ENCODE measurements at regions of chr9 and their contacts with region 1.

Region 1: DNA sequence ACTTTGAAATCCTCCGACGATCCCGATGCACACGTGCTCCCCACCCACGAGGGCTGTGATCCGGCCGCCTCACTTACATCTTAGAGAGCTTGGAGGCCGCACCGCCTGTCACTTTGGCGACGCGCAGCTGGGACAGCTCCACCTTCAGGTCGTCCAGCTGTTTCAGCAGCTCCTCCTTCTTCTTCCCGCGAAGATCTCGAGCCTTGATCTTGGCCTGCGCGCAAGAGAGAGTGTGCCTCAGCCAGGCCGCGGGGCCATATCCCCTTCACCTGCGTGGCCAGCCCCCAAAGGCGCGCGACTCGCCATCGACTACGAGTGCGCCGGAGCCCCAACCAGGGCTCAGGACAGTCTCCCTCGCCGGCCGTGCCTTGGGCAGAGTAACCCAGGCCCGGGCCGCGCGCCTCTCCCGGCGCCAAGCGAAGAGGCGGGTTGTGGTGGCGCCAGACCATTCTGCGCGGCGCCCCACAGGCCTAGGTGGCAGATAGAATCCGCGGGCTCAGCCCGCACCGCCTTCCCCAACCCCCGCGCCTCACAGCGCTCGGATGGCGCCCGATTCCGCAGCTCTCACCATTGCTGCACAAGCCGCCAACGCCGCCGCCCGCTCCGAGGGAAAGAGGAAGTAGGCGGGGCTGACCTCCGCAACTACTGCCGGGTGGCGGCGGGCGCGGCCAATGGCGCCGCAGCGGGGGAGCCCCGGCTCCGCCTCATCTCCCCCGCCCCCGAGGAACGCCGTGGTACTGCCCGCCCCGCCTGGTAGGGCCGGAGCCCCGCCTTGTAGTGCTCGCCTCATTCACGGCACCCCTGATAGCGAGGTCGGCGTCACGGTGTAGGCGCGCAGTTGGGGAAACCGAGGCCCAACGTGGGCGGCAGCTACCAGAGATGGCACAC is at the starts of genes ARPC5L and RPL35:
- DNase-seq: peak; percentile 92
- ATAC-seq: peak; percentile 95
- H3K4me3 Mint-ChIP-seq: peak within 1 kb of the TSS; percentile 95
- H3K27ac Mint-ChIP-seq: peak within 1 kb of the TSS; percentile 94
- H3K4me1 Mint-ChIP-seq: peaks cover 47% of the 10 kb centered on the region
- H3K27me3 Mint-ChIP-seq: no peaks in the 10 kb centered on the region
- CTCF ChIP-seq: no peak
- total RNA-seq, gene ARPC5L: 91.5 and 93.1 TPM in 2 replicates
- total RNA-seq, gene RPL35: 2,037 and 2,426 TPM in 2 replicates

Region 2: DNA sequence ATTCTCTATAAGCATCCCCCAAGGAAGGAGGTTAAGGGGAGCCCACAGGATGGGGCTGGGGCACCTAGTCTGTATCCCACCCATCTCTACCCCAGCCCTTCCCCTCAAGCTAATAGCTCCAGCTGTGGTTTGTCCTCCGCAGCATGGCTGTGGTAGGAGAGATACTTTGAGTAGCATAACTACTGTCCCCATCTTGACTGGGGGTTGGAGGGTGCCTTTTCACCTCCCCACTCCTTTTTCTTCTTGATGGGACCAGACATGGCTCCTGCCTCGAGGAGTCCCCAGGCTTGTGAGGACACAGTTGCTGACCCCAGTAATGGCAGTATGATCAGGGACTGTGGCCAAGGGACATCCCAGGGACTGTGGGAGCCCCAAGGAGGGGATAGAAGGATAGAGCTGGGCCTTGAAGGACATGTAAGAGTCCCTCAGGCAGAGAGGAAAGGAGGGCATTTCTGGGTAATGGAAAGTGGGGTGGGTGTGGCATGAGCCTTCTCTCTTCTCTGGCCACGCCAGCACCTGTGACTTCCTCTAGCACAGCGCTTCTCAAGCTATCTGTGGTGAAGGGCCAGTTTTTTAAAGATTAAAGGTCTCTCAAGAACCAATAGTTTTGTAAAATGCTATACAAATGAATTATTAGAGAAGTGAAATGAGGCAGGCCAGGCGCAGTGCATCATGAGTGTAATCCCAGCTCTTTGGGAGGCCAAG is 70.6 kb before region 1 on chr9:
- CTCF ChIA-PET with region 1: no interaction called
- POLR2A ChIA-PET with region 1: interaction called, 10 read pairs
- intact Hi-C with region 1: no loop called
- DNase-seq: no peak
- ATAC-seq: peak; percentile 37
- H3K4me3 Mint-ChIP-seq: no peak overlapping the region
- H3K27ac Mint-ChIP-seq: no peak overlapping the region
- H3K4me1 Mint-ChIP-seq: peaks cover 15% of the 10 kb centered on the region
- H3K27me3 Mint-ChIP-seq: no peaks in the 10 kb centered on the region
- CTCF ChIP-seq: no peak

Region 3: DNA sequence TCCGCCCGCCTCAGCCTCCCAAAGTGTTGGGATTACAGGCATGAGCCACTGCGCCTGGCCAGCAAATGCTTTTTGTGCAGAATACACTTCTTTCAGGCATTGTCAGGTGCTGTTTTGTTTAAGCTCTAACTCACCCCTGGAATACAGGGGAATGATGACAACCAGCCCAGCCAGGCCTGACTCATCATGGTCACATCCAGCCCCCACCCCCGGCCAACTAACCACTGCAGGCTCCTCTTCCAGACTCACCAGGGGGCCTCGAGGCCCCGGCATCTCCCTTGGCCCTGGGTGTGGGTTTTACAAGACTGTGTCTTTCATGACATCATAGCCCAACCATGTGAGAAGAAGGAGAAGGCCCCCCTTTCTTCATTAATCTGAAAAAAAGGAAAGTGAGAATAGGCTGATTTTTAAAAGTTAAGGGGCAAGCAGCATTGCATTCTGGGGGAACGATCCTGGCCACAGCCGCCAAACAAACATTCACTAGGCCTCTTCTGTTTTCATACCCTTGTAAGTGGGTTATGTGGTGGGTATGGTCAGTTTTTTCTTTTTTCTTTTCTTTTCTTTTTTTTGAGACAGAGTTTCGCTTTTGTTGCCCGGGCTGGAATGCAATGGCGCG is 49.1 kb before region 1 on chr9:
- CTCF ChIA-PET with region 1: no interaction called
- POLR2A ChIA-PET with region 1: no interaction called
- intact Hi-C with region 1: no loop called
- DNase-seq: no peak
- ATAC-seq: no peak
- H3K4me3 Mint-ChIP-seq: no peak overlapping the region
- H3K27ac Mint-ChIP-seq: no peak overlapping the region
- H3K4me1 Mint-ChIP-seq: no peaks in the 10 kb centered on the region
- H3K27me3 Mint-ChIP-seq: no peaks in the 10 kb centered on the region
- CTCF ChIP-seq: no peak

Region 4: DNA sequence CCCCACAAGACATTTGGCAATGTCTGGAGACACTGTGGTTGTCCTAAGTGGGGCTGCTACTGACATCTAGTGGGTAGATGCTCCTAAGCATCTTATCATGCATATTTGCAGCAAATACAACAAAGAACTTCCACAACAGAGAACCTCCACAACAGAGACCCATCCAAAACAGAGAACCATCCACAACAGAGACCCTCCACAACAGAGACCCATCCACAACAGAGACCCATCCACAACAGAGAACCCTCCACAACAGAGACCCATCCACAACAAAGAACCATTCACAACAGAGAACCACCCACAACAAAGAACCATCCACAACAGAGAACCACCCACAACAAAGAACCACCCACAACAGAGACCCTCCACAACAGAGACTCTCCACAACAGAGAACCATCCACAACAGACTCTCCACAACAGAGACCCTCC is 33.2 kb after region 1 on chr9:
- CTCF ChIA-PET with region 1: interaction called, 29 read pairs
- POLR2A ChIA-PET with region 1: interaction called, 3 read pairs
- intact Hi-C with region 1: loop called (anchors 2 kb)
- DNase-seq: no peak
- ATAC-seq: peak; percentile 85
- H3K4me3 Mint-ChIP-seq: no peak overlapping the region
- H3K27ac Mint-ChIP-seq: peak overlapping the region; percentile 50
- H3K4me1 Mint-ChIP-seq: no peaks in the 10 kb centered on the region
- H3K27me3 Mint-ChIP-seq: no peaks in the 10 kb centered on the region
- CTCF ChIP-seq: no peak

Region 5: GRCh38 chr9:124906966-124907365 is 45.4 kb after region 1 on chr9:
- CTCF ChIA-PET with region 1: no interaction called
- POLR2A ChIA-PET with region 1: no interaction called
- intact Hi-C with region 1: no loop called
- DNase-seq: no peak
- ATAC-seq: no peak
- H3K4me3 Mint-ChIP-seq: no peak overlapping the region
- H3K27ac Mint-ChIP-seq: no peak overlapping the region
- H3K4me1 Mint-ChIP-seq: no peaks in the 10 kb centered on the region
- H3K27me3 Mint-ChIP-seq: no peaks in the 10 kb centered on the region
- CTCF ChIP-seq: no peak

Region 6: GRCh38 chr9:124928116-124928515 is 66.5 kb after region 1 on chr9:
- CTCF ChIA-PET with region 1: no interaction called
- POLR2A ChIA-PET with region 1: no interaction called
- intact Hi-C with region 1: no loop called
- DNase-seq: no peak
- ATAC-seq: no peak
- H3K4me3 Mint-ChIP-seq: no peak overlapping the region
- H3K27ac Mint-ChIP-seq: no peak overlapping the region
- H3K4me1 Mint-ChIP-seq: peaks cover 2% of the 10 kb centered on the region
- H3K27me3 Mint-ChIP-seq: no peaks in the 10 kb centered on the region
- CTCF ChIP-seq: no peak

Region 7: GRCh38 chr9:124964604-124965003 is 103.0 kb after region 1 on chr9:
- CTCF ChIA-PET with region 1: no interaction called
- POLR2A ChIA-PET with region 1: no interaction called
- intact Hi-C with region 1: no loop called
- DNase-seq: no peak
- ATAC-seq: no peak
- H3K4me3 Mint-ChIP-seq: no peak overlapping the region
- H3K27ac Mint-ChIP-seq: no peak overlapping the region
- H3K4me1 Mint-ChIP-seq: peaks cover 22% of the 10 kb centered on the region
- H3K27me3 Mint-ChIP-seq: no peaks in the 10 kb centered on the region
- CTCF ChIP-seq: no peak

Region 8: DNA sequence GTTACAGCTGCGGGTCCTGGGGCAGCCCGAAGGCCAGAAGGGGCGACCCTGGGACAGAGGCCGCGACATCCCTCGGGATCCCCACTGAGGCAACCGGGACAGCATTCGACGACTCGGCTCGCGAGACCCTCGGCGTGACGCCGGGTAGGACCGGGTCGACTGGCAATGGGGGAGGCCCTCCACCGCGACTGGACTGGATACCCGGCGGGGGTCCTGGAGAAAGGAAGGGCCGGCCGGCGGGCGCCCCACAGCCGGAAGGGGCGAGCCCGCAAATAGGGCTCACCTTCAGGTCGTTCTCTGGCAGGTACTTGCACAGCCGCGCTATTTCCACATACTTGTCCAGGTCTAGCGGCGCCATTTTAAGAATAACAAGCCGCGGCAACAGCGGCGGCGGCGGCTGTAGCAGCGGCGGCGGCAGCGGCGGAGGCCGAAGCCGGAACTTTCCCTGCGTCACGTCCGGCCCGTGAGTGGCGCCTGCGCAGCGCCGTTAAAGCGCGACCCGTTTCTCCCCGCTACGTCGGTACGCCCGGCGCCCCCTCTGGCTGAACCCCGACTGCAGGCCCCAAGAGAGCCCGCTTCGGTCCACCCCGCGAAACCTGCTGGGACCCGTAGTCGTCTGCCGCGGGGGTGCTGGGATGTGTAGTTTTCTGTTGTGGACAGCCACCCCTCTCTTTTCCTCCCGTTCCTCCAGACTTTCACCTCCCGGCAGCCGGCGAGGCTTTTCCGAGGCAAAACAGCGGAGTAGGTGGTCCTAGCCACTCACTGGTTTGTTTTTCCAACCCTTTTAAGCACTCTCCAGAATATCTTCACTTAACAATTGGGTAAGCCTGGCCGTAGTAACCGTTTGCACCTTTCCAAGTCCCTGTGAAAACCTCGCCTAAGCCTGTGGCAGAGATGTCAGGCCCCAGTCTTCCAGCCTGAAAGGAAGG is 328.0 kb after region 1 on chr9 and contains the start of gene PPP6C:
- CTCF ChIA-PET with region 1: no interaction called
- POLR2A ChIA-PET with region 1: no interaction called
- intact Hi-C with region 1: loop called (anchors 5 kb)
- DNase-seq: peak; percentile 93
- ATAC-seq: peak; percentile 98
- H3K4me3 Mint-ChIP-seq: peak within 1 kb of the TSS; percentile 97
- H3K27ac Mint-ChIP-seq: peak within 1 kb of the TSS; percentile 91
- H3K4me1 Mint-ChIP-seq: peaks cover 44% of the 10 kb centered on the region
- H3K27me3 Mint-ChIP-seq: no peaks in the 10 kb centered on the region
- CTCF ChIP-seq: no peak
- total RNA-seq, gene PPP6C: 41.2 and 47.0 TPM in 2 replicates

Region 9: GRCh38 chr9:125261501-125262293 is 400.1 kb after region 1 on chr9 and contains the start of gene GAPVD1:
- CTCF ChIA-PET with region 1: no interaction called
- POLR2A ChIA-PET with region 1: interaction called, 9 read pairs
- intact Hi-C with region 1: loop called (anchors 5 kb)
- DNase-seq: peak; percentile 97
- ATAC-seq: peak; percentile 93
- H3K4me3 Mint-ChIP-seq: peak within 1 kb of the TSS; percentile 96
- H3K27ac Mint-ChIP-seq: peak within 1 kb of the TSS; percentile 99
- H3K4me1 Mint-ChIP-seq: peaks cover 48% of the 10 kb centered on the region
- H3K27me3 Mint-ChIP-seq: peaks cover 2% of the 10 kb centered on the region
- CTCF ChIP-seq: no peak
- total RNA-seq, gene GAPVD1: 46.6 and 53.9 TPM in 2 replicates

Measured in activated B cell treated with CpG ODN at 0.5 μM for 24 hours (primary cell).